ENCODE measurements at regions of chr10 and their contacts with region 1.

Region 1: GRCh38 chr10:126110489-126111180 is 214.3 kb downstream of the FANK1 start:
- H3K4me3 Mint-ChIP-seq: no peak overlapping the region
- H3K27ac Mint-ChIP-seq: peak overlapping the region; percentile 84
- H3K4me1 Mint-ChIP-seq: peaks cover 65% of the 10 kb centered on the region
- H3K27me3 Mint-ChIP-seq: no peaks in the 10 kb centered on the region

Region 2: DNA sequence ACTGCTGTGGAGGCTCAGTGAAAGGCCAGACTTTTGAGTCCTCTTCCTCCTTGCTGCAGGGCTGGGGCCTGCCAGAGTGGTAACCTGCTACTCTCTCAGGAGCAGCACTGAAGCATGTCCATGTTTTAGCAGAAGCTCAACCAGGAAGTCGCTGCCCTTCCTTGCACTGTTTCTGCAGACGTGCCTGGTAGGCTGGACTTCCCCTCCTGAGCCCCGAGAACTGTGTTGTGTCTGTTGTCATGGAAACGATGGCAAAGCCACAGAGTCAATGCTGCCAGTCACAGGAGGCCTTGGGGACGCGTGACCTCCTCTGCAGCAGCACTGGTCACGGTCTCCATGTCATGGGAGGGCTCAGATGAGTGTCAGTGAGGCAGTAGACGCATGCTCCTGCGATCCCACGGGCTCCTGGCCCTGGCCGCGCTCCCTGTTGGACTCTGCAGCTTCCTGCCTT is 68.8 kb before region 1 on chr10:
- intact Hi-C with region 1: loop called (anchors 2 kb)
- H3K4me3 Mint-ChIP-seq: peak overlapping the region; percentile 51
- H3K27ac Mint-ChIP-seq: peak overlapping the region; percentile 96
- H3K4me1 Mint-ChIP-seq: peaks cover 49% of the 10 kb centered on the region
- H3K27me3 Mint-ChIP-seq: no peaks in the 10 kb centered on the region

Measured in dendritic cell treated with granulocyte-macrophage colony-stimulating factor and Interleukin-4, amounts not matched to agents 40 ng/mL and 50 ng/mL, for 4 days (primary cell).